GM12878 (cell line): ENCODE measurements at regions of chr1 and their contacts with region 1.

Region 1: GRCh38 chr1:8727809-8728213 is 89.6 kb downstream of the RERE start:
- DNase-seq: no peak
- ATAC-seq: peak; percentile 73
- H3K4me3 ChIP-seq: no peak overlapping the region
- H3K27ac ChIP-seq: no peak overlapping the region
- H3K4me1 ChIP-seq: peaks cover 25% of the 10 kb centered on the region
- H3K27me3 ChIP-seq: no peaks in the 10 kb centered on the region
- CTCF ChIP-seq: no peak
- EP300 ChIP-seq: no peak
- POLR2A ChIP-seq: no peak
- RAD21 ChIP-seq: no peak

Region 2: GRCh38 chr1:8477166-8477982 is 250.4 kb before region 1 on chr1:
- CTCF ChIA-PET with region 1: interaction called, 14 read pairs
- POLR2A ChIA-PET with region 1: interaction called, 3 read pairs
- RAD21 ChIA-PET with region 1: interaction called, 8 read pairs
- SMC1A ChIA-PET with region 1: no interaction called
- in situ Hi-C with region 1: no loop called
- intact Hi-C with region 1: no loop called
- DNase-seq: peak; percentile 93
- ATAC-seq: peak; percentile 87
- H3K4me3 ChIP-seq: no peak overlapping the region
- H3K27ac ChIP-seq: peak overlapping the region; percentile 1; the same call in 1 of the 2 replicates
- H3K4me1 ChIP-seq: peaks cover 53% of the 10 kb centered on the region
- H3K27me3 ChIP-seq: no peaks in the 10 kb centered on the region
- CTCF ChIP-seq: no peak
- EP300 ChIP-seq: peak; percentile 33 to 75; a peak in 1 of 4 replicates
- POLR2A ChIP-seq: no peak
- RAD21 ChIP-seq: no peak

Region 3: DNA sequence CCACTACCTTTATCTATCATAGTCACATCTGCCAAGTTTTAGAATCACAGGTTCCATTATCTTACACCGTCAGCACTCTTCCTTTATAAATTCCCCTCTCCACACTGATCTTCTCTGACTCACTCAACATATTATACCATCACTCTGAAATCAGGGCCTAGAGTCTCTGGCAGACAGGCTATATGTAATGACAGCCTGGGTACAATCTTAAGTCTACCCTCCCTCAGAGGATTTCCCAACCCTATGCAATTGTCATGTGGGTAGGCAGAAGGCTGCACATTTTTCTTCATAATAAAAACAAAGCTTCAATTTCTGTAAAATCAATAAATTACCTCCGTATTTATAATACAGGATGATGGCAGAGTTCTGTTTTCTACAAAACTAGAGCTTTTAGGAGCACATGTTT is 48.4 kb before region 1 on chr1:
- CTCF ChIA-PET with region 1: interaction called, 74 read pairs
- POLR2A ChIA-PET with region 1: interaction called, 5 read pairs
- RAD21 ChIA-PET with region 1: interaction called, 13 read pairs
- SMC1A ChIA-PET with region 1: interaction called, 123 read pairs
- in situ Hi-C with region 1: no loop called
- intact Hi-C with region 1: no loop called
- DNase-seq: no peak
- ATAC-seq: peak; percentile 49
- H3K4me3 ChIP-seq: no peak overlapping the region
- H3K27ac ChIP-seq: 0 out of 2 replicates have a peak overlapping the region, but pooled peaks have one; percentile 2
- H3K4me1 ChIP-seq: peaks cover 13% of the 10 kb centered on the region
- H3K27me3 ChIP-seq: no peaks in the 10 kb centered on the region
- CTCF ChIP-seq: no peak
- EP300 ChIP-seq: no peak
- POLR2A ChIP-seq: no peak
- RAD21 ChIP-seq: no peak

Region 4: GRCh38 chr1:8702850-8703810 is 24.7 kb before region 1 on chr1:
- CTCF ChIA-PET with region 1: interaction called, 20 read pairs
- POLR2A ChIA-PET with region 1: interaction called, 5 read pairs
- RAD21 ChIA-PET with region 1: interaction called, 5 read pairs
- SMC1A ChIA-PET with region 1: interaction called, 27 read pairs
- in situ Hi-C with region 1: no loop called
- intact Hi-C with region 1: no loop called
- DNase-seq: no peak
- ATAC-seq: peak; percentile 75
- H3K4me3 ChIP-seq: peak overlapping the region; percentile 57
- H3K27ac ChIP-seq: peak overlapping the region; percentile 54
- H3K4me1 ChIP-seq: no peaks in the 10 kb centered on the region; the same call in 1 of the 2 replicates
- H3K27me3 ChIP-seq: no peaks in the 10 kb centered on the region
- CTCF ChIP-seq: peak; percentile 6 to 55 (median 17); a peak in 3 of 6 replicates
- EP300 ChIP-seq: no peak
- POLR2A ChIP-seq: peak; percentile 87
- RAD21 ChIP-seq: peak; percentile 29; the same call in 1 of the 2 replicates

Region 5: DNA sequence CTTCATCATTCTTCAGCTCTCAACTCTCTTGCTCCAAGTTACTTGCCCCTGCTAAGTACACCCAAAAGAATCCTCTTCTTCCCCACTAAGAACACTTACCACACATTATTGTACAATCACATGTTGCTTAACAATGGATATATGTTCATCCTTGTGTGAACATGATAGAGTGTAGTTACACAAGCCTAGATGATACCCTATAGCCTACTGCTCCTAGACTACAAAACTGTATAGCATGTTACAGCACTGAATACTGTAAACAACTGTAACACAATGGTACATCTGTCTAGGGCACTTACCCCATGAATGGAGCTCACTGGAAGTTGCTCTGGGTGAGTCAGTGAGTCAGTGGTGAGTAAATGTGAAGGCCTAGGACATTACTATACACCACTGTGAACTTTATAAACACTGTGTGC is 12.2 kb after region 1 on chr1:
- CTCF ChIA-PET with region 1: interaction called, 31 read pairs
- POLR2A ChIA-PET with region 1: interaction called, 7 read pairs
- RAD21 ChIA-PET with region 1: interaction called, 11 read pairs
- SMC1A ChIA-PET with region 1: interaction called, 20 read pairs
- in situ Hi-C with region 1: no loop called
- intact Hi-C with region 1: no loop called
- DNase-seq: no peak
- ATAC-seq: no peak
- H3K4me3 ChIP-seq: no peak overlapping the region
- H3K27ac ChIP-seq: no peak overlapping the region
- H3K4me1 ChIP-seq: peaks cover 5% of the 10 kb centered on the region; the same call in 1 of the 2 replicates
- H3K27me3 ChIP-seq: no peaks in the 10 kb centered on the region
- CTCF ChIP-seq: no peak
- EP300 ChIP-seq: no peak
- POLR2A ChIP-seq: no peak
- RAD21 ChIP-seq: no peak

Region 6: GRCh38 chr1:8763888-8764287 is 36.1 kb after region 1 on chr1:
- CTCF ChIA-PET with region 1: interaction called, 47 read pairs
- POLR2A ChIA-PET with region 1: interaction called, 4 read pairs
- RAD21 ChIA-PET with region 1: interaction called, 49 read pairs
- SMC1A ChIA-PET with region 1: interaction called, 55 read pairs
- in situ Hi-C with region 1: no loop called
- intact Hi-C with region 1: no loop called
- DNase-seq: peak; percentile 84
- ATAC-seq: peak; percentile 75
- H3K4me3 ChIP-seq: peak overlapping the region; percentile 8; the same call in 1 of the 2 replicates
- H3K27ac ChIP-seq: peak overlapping the region; percentile 93
- H3K4me1 ChIP-seq: peaks cover 29% of the 10 kb centered on the region
- H3K27me3 ChIP-seq: no peaks in the 10 kb centered on the region
- CTCF ChIP-seq: peak; percentile 15 to 31 (median 19); a peak in 3 of 6 replicates
- EP300 ChIP-seq: no peak
- POLR2A ChIP-seq: no peak; the same call in 1 of the 2 replicates
- RAD21 ChIP-seq: no peak

Region 7: GRCh38 chr1:8848663-8849386 is 121.0 kb after region 1 on chr1:
- CTCF ChIA-PET with region 1: interaction called, 143 read pairs
- POLR2A ChIA-PET with region 1: interaction called, 3 read pairs
- RAD21 ChIA-PET with region 1: interaction called, 88 read pairs
- SMC1A ChIA-PET with region 1: interaction called, 101 read pairs
- in situ Hi-C with region 1: no loop called
- intact Hi-C with region 1: loop called (anchors 2 kb)
- DNase-seq: no peak
- ATAC-seq: peak; percentile 98
- H3K4me3 ChIP-seq: no peak overlapping the region
- H3K27ac ChIP-seq: no peak overlapping the region
- H3K4me1 ChIP-seq: peaks cover 2% of the 10 kb centered on the region; the same call in 1 of the 2 replicates
- H3K27me3 ChIP-seq: no peaks in the 10 kb centered on the region
- CTCF ChIP-seq: peak; percentile 82 to 95 (median 87)
- EP300 ChIP-seq: no peak
- POLR2A ChIP-seq: no peak
- RAD21 ChIP-seq: peak; percentile 87

Region 8: DNA sequence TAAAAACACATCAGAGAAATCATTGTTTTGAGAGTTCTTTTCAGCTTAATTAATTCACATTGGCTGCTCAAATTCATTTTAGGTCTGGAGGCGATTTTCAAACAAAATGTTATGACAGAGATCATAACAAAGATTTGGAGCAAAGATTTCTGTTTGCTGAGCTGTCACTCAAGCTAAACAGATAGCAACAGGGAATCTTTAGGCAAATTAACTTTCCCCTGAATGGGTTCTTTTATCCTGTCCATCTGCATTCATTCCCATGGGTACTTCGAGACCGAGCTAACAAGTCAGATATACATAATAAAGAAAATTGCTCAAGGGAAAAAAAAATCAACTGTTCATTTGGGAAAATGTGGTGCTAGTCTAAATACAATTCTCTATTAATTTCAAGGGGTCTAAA is 187.6 kb after region 1 on chr1:
- CTCF ChIA-PET with region 1: no interaction called
- POLR2A ChIA-PET with region 1: no interaction called
- RAD21 ChIA-PET with region 1: no interaction called
- SMC1A ChIA-PET with region 1: no interaction called
- in situ Hi-C with region 1: no loop called
- intact Hi-C with region 1: no loop called
- DNase-seq: no peak
- ATAC-seq: no peak
- H3K4me3 ChIP-seq: no peak overlapping the region
- H3K27ac ChIP-seq: no peak overlapping the region
- H3K4me1 ChIP-seq: no peaks in the 10 kb centered on the region
- H3K27me3 ChIP-seq: peaks cover 0 to 3% of the 10 kb centered on the region in 2 experiments; a peak in 3 of 4 replicates
- CTCF ChIP-seq: no peak
- EP300 ChIP-seq: no peak
- POLR2A ChIP-seq: no peak
- RAD21 ChIP-seq: no peak

Region 9: GRCh38 chr1:8962812-8963530 is 235.2 kb after region 1 on chr1:
- CTCF ChIA-PET with region 1: no interaction called
- POLR2A ChIA-PET with region 1: no interaction called
- RAD21 ChIA-PET with region 1: no interaction called
- SMC1A ChIA-PET with region 1: no interaction called
- in situ Hi-C with region 1: no loop called
- intact Hi-C with region 1: no loop called
- DNase-seq: no peak
- ATAC-seq: peak; percentile 90
- H3K4me3 ChIP-seq: no peak overlapping the region
- H3K27ac ChIP-seq: no peak overlapping the region
- H3K4me1 ChIP-seq: no peaks in the 10 kb centered on the region; the same call in 1 of the 2 replicates
- H3K27me3 ChIP-seq: no peaks in the 10 kb centered on the region; a peak in 1 of 4 replicates
- CTCF ChIP-seq: peak; percentile 59 to 79 (median 66)
- EP300 ChIP-seq: no peak
- POLR2A ChIP-seq: no peak
- RAD21 ChIP-seq: peak; percentile 44

Region 10: GRCh38 chr1:8985915-8986813 is 258.4 kb after region 1 on chr1:
- CTCF ChIA-PET with region 1: no interaction called
- POLR2A ChIA-PET with region 1: no interaction called
- RAD21 ChIA-PET with region 1: no interaction called
- SMC1A ChIA-PET with region 1: no interaction called
- in situ Hi-C with region 1: no loop called
- intact Hi-C with region 1: no loop called
- DNase-seq: no peak
- ATAC-seq: no peak
- H3K4me3 ChIP-seq: no peak overlapping the region
- H3K27ac ChIP-seq: no peak overlapping the region
- H3K4me1 ChIP-seq: no peaks in the 10 kb centered on the region
- H3K27me3 ChIP-seq: no peaks in the 10 kb centered on the region
- CTCF ChIP-seq: no peak
- EP300 ChIP-seq: no peak
- POLR2A ChIP-seq: no peak
- RAD21 ChIP-seq: no peak

Region 11: DNA sequence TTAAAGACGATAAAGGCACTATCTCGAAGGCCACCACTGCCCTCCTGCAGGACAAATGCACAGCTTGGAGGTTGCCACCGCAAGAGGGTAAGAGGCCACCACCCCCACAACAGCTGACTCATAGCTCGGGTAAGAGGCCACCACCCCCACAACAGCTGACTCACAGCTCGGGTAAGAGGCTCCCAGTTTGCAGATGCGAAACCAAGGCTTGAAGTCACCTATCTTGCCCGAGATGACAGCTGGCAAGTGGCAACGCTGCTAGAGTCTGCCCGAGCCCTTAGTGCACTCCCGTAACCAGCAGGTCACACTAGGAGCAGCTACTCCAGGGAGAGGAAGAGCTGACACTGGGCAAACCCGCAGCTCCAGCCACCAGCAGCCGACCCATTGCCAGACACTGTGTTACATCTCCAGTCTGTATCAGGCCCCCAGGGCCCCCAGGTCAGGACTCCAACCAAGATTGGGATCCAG is 547.8 kb after region 1 on chr1:
- CTCF ChIA-PET with region 1: no interaction called
- POLR2A ChIA-PET with region 1: no interaction called
- RAD21 ChIA-PET with region 1: no interaction called
- SMC1A ChIA-PET with region 1: no interaction called
- in situ Hi-C with region 1: no loop called
- intact Hi-C with region 1: no loop called
- DNase-seq: peak; percentile 59
- ATAC-seq: peak; percentile 97
- H3K4me3 ChIP-seq: no peak overlapping the region
- H3K27ac ChIP-seq: no peak overlapping the region
- H3K4me1 ChIP-seq: peaks cover 10% of the 10 kb centered on the region
- H3K27me3 ChIP-seq: no peaks in the 10 kb centered on the region
- CTCF ChIP-seq: no peak
- EP300 ChIP-seq: peak; percentile 22 to 41; a peak in 2 of 4 replicates
- POLR2A ChIP-seq: no peak
- RAD21 ChIP-seq: no peak